CD4-positive, alpha-beta memory T cell (primary cell): ENCODE measurements at regions of chr2 and their contacts with region 1.

Region 1: GRCh38 chr2:144332356-144333142 is 187.4 kb downstream of the ZEB2 start:
- DNase-seq: peak; percentile 79 to 91 (median 89)
- H3K4me3 ChIP-seq: peak overlapping the region in 1 of 2 donors; percentile 70
- H3K4me3 Mint-ChIP-seq: peak overlapping the region; percentile 87 to 96 (median 94)
- H3K27ac ChIP-seq: peak overlapping the region; percentile 68
- H3K27ac Mint-ChIP-seq: peak overlapping the region; percentile 78 to 99 (median 92)
- H3K4me1 ChIP-seq: peaks cover 26% of the 10 kb centered on the region
- H3K4me1 Mint-ChIP-seq: peaks cover 12 to 36% (median 16%) of the 10 kb centered on the region in 4 donors
- H3K27me3 ChIP-seq: no peaks in the 10 kb centered on the region
- H3K27me3 Mint-ChIP-seq: no peaks in the 10 kb centered on the region

Region 2: GRCh38 chr2:144183727-144184126 is 148.8 kb before region 1 on chr2:
- CTCF ChIA-PET with region 1: no interaction called
- POLR2A ChIA-PET with region 1: interaction called, 6 read pairs
- intact Hi-C with region 1: loop called (anchors 5 kb)
- DNase-seq: peak; percentile 76 to 86 (median 81)
- H3K4me3 ChIP-seq: no peak overlapping the region
- H3K4me3 Mint-ChIP-seq: peak overlapping the region; percentile 65 to 88 (median 80)
- H3K27ac ChIP-seq: no peak overlapping the region
- H3K27ac Mint-ChIP-seq: peak overlapping the region; percentile 45 to 94 (median 83)
- H3K4me1 ChIP-seq: peaks cover 17% of the 10 kb centered on the region
- H3K4me1 Mint-ChIP-seq: peaks cover 11 to 21% (median 12%) of the 10 kb centered on the region in 4 donors
- H3K27me3 ChIP-seq: no peaks in the 10 kb centered on the region
- H3K27me3 Mint-ChIP-seq: no peaks in the 10 kb centered on the region

Region 3: GRCh38 chr2:144267239-144267638 is 65.3 kb before region 1 on chr2:
- CTCF ChIA-PET with region 1: no interaction called
- POLR2A ChIA-PET with region 1: no interaction called
- intact Hi-C with region 1: loop called (anchors 2 kb)
- DNase-seq: peak in 3 of 5 donors; percentile 5 to 22 (median 14)
- H3K4me3 ChIP-seq: no peak overlapping the region
- H3K4me3 Mint-ChIP-seq: peak overlapping the region in 1 of 8 donors; percentile 1
- H3K27ac ChIP-seq: no peak overlapping the region
- H3K27ac Mint-ChIP-seq: peak overlapping the region in 2 of 7 donors; percentile 1 to 15
- H3K4me1 ChIP-seq: peaks cover 14% of the 10 kb centered on the region
- H3K4me1 Mint-ChIP-seq: peaks cover 12 to 28% (median 25%) of the 10 kb centered on the region in 4 donors
- H3K27me3 ChIP-seq: no peaks in the 10 kb centered on the region
- H3K27me3 Mint-ChIP-seq: no peaks in the 10 kb centered on the region

Region 4: DNA sequence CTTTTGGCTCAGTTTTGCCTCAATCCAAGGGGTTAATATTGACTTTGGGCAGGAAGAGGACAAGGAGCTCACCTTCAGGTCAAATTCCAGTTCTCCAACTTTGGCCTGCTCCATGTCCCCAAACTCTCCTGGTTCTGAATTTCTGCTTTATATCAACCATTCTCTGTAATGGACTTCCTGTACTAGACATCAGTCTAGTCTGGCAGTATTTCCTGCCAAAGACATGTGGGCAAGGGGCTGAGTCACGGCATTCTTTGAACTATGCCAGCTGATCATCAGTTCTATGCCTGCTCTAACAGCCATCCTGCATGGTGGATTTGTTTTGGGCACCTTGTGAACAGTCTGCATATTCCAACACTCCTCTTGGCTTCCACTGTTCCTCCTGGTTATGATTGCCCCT is 12.1 kb before region 1 on chr2:
- CTCF ChIA-PET with region 1: interaction called, 4 read pairs
- POLR2A ChIA-PET with region 1: interaction called, 20 read pairs
- intact Hi-C with region 1: loop called (anchors 1 kb)
- DNase-seq: peak; percentile 29 to 75 (median 50)
- H3K4me3 ChIP-seq: no peak overlapping the region
- H3K4me3 Mint-ChIP-seq: peak overlapping the region in 4 of 8 donors; percentile 11 to 68 (median 40)
- H3K27ac ChIP-seq: no peak overlapping the region
- H3K27ac Mint-ChIP-seq: peak overlapping the region in 6 of 7 donors; percentile 0 to 90 (median 44)
- H3K4me1 ChIP-seq: peaks cover 37% of the 10 kb centered on the region
- H3K4me1 Mint-ChIP-seq: peaks cover 23 to 36% (median 28%) of the 10 kb centered on the region in 4 donors
- H3K27me3 ChIP-seq: no peaks in the 10 kb centered on the region
- H3K27me3 Mint-ChIP-seq: no peaks in the 10 kb centered on the region

Region 5: GRCh38 chr2:144516981-144517865 is 184.7 kb after region 1 on chr2:
- CTCF ChIA-PET with region 1: no interaction called
- POLR2A ChIA-PET with region 1: interaction called, 5 read pairs
- intact Hi-C with region 1: loop called (anchors 5 kb)
- DNase-seq: peak; percentile 35 to 59 (median 54)
- H3K4me3 ChIP-seq: peak overlapping the region; percentile 36 to 63
- H3K4me3 Mint-ChIP-seq: peak overlapping the region in 3 of 8 donors; percentile 98 to 100 (median 99)
- H3K27ac ChIP-seq: peak overlapping the region; percentile 44
- H3K27ac Mint-ChIP-seq: peak overlapping the region in 5 of 7 donors; percentile 80 to 94 (median 90)
- H3K4me1 ChIP-seq: peaks cover 26% of the 10 kb centered on the region
- H3K4me1 Mint-ChIP-seq: peaks cover 7 to 11% (median 9%) of the 10 kb centered on the region in 4 donors
- H3K27me3 ChIP-seq: peaks cover 26% of the 10 kb centered on the region
- H3K27me3 Mint-ChIP-seq: peaks cover 35 to 46% of the 10 kb centered on the region in 2 donors